ENCODE measurements at regions of chr11 and their contacts with region 1.

Region 1: GRCh38 chr11:19790831-19791552 is 78.4 kb downstream of the NAV2 start:
- DNase-seq: peak in 1 of 2 experiments; percentile 74
- H3K4me3 ChIP-seq: no peak overlapping the region
- H3K27ac ChIP-seq: no peak overlapping the region
- H3K4me1 ChIP-seq: peaks cover 5 to 28% (median 17%) of the 10 kb centered on the region in 4 experiments
- H3K27me3 ChIP-seq: no peaks in the 10 kb centered on the region
- CTCF ChIP-seq: no peak
- EP300 ChIP-seq: peak in 1 of 2 experiments; percentile 89; a peak in 1 of 3 replicates
- POLR2A ChIP-seq: no peak
- RAD21 ChIP-seq: 0 out of 4 replicates have a peak, but pooled peaks of 1 of the 2 experiments have one; percentile 6

Region 2: DNA sequence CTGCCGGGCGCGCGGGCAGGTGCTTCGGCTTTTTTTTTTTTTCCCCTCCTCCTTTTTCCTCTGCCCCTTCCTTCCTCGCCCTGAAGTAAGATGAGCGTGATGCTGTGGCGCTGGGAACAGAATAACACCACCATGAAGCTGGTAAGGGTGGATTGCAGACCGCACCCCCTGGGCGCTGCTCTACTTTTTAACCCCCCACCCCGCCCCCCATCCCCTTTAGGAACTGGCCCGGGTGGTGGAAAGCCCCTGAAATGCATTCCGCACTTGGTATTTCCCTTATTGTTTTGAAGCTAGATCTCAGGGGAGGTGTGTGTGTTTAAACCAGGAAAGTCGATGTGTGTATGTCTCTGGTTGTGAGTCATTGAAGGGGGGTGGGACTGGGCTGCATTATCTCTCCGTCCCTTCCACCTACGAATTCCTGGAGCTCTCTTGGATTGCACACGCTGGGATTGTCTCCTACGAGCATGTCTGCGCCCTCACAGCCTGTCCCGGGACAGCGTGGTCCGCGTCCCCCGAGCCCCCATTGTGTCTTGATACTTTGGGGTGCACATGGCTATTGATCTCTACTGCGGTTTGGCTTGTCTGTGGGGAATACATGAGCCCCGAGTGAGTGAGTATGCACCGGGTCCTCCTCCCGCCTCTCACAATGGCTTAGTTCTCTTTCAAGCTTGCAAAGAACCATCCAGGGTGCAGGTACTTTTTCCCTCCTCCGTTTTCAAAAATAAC is 13.5 kb before region 1 on chr11:
- CTCF ChIA-PET with region 1: interaction called, 16 read pairs
- POLR2A ChIA-PET with region 1: interaction called, 21 read pairs
- DNase-seq: no peak
- H3K4me3 ChIP-seq: peak overlapping the region; percentile 84 to 96 (median 90)
- H3K27ac ChIP-seq: peak overlapping the region; percentile 92
- H3K4me1 ChIP-seq: peaks cover 17 to 43% (median 37%) of the 10 kb centered on the region in 4 experiments
- H3K27me3 ChIP-seq: no peaks in the 10 kb centered on the region
- CTCF ChIP-seq: no peak
- EP300 ChIP-seq: peak in 1 of 2 experiments; percentile 7; a peak in 1 of 3 replicates
- POLR2A ChIP-seq: peak; percentile 78 to 81
- RAD21 ChIP-seq: no peak

Region 3: GRCh38 chr11:19808076-19808911 is 17.3 kb after region 1 on chr11:
- CTCF ChIA-PET with region 1: interaction called, 44 read pairs
- POLR2A ChIA-PET with region 1: no interaction called
- DNase-seq: no peak
- H3K4me3 ChIP-seq: no peak overlapping the region
- H3K27ac ChIP-seq: no peak overlapping the region
- H3K4me1 ChIP-seq: peaks cover 11 to 31% (median 21%) of the 10 kb centered on the region in 4 experiments; a peak in 6 of 7 replicates
- H3K27me3 ChIP-seq: no peaks in the 10 kb centered on the region
- CTCF ChIP-seq: no peak
- EP300 ChIP-seq: no peak
- POLR2A ChIP-seq: no peak
- RAD21 ChIP-seq: no peak

Measured in H1 (cell line).